ENCODE measurements at regions of chr2 and their contacts with region 1.

Region 1: DNA sequence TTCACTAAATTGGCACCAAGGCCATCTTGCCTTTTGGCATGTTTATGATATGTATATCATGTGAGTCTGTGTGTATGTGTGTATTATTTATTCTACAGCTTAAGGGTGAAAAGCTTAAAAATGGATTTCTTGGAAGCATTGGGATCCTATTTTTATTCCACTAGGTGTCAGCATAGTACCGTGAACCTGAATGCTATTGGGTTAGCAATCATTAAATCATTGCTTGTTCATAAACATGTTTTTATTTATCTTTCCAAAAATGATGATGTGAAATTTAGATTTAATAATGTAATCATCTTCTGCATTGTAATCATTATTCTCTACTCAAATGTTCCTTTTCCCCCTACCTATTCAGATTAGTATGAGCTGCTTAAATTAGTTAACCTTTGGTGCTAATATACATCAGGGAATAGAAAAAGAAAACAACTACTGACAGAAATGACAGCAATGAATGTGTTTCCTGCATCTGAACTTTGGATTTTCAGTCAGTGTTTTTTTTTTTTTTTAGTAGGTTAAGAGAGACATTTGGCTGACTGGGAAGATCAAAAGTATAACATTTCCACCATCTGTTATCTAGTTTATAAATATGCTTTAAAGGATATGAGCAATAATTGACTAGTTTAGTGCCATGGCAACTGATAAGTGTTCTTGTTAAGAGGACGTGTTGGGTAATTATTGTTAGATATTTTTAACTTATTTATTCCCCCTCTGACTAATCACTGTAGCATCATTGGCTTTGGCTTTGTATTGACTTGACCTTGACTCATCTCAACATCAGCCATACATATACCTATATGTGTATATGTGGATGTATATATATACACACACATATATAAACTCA is 14.1 kb upstream of the ZSWIM2 start:
- DNase-seq: no peak
- ATAC-seq: peak; percentile 53
- H3K4me3 ChIP-seq: no peak overlapping the region
- H3K27ac ChIP-seq: no peak overlapping the region
- H3K4me1 ChIP-seq: no peaks in the 10 kb centered on the region
- H3K27me3 ChIP-seq: no peaks in the 10 kb centered on the region
- CTCF ChIP-seq: peak; percentile 79

Region 2: GRCh38 chr2:186726938-186727337 is 136.2 kb before region 1 on chr2:
- intact Hi-C with region 1: no loop called
- DNase-seq: no peak
- ATAC-seq: no peak
- H3K4me3 ChIP-seq: no peak overlapping the region
- H3K27ac ChIP-seq: no peak overlapping the region
- H3K4me1 ChIP-seq: no peaks in the 10 kb centered on the region
- H3K27me3 ChIP-seq: no peaks in the 10 kb centered on the region
- CTCF ChIP-seq: no peak

Region 3: DNA sequence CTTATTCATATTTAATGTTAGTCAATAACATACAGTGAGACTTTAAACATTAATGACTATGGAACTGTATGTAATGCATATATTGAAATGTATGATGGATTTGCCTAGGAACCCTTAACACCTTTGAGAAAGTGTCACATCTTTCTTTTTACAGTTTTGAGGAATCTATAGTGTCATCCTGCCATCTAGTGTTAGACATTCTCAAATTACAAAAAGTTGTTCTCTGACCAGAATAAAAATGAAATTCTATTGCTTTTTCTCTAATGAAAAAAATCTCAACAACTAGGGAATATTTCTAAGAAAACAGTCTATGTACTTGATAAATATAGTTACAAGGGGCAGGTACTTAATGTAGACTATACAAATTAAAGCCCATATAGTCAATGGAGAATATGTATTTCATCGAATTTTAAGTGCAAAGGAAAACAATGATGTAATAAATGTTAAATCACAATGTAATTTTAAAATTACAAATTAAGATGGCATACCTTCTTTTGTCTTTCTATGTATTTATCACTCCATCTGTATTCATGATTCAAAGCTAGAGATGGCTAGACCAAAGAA is 590.1 kb after region 1 on chr2:
- intact Hi-C with region 1: loop called (anchors 5 kb)
- DNase-seq: no peak
- ATAC-seq: no peak
- H3K4me3 ChIP-seq: no peak overlapping the region
- H3K27ac ChIP-seq: no peak overlapping the region
- H3K4me1 ChIP-seq: no peaks in the 10 kb centered on the region
- H3K27me3 ChIP-seq: no peaks in the 10 kb centered on the region
- CTCF ChIP-seq: peak; percentile 53